ENCODE measurements at regions of chr5 and their contacts with region 1.

Region 1: DNA sequence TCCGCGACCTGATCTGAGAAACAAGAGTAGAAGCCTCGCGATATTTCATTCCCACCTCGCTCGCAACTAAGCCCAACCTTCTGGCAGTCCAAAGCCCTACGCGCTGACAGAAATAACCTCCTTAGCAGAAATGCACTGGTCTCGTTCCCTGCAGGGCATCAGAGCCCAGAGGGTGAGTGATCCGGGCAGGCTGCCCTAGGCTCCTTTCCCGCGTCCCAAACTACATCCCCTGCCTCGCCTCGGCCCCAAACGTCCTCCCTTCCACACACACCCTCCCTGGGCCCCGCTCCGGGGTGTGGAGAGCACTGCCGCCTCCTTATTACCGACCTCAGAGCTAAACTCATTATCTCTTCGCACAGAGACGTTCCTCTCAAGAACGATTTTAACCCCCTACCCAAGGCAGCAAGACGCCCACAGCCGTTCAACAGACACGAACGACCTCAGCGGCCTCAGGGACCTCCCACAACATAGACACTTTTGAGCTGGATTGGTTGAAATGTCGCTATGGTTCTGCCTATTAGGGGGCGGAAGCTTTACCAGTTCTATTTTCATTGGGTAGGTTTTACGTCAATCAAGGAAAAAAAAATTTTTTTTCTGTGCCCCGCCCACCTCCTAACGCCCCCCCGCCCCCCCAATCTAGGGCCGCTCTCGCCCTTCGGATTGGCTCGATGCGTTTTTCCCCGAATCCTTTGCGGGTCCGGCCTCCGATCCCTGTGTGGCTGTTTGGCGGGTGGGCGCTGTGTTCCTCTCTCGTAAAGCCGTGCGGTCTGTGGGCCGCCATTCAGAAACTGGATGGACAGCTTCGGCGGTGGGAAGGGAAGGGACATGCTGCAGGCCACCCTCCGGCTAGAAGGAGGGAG is at the start of gene CETN3:
- DNase-seq: peak; percentile 92 to 95
- H3K4me3 ChIP-seq: peak within 1 kb of the TSS; percentile 62 to 79
- H3K27ac ChIP-seq: peak within 1 kb of the TSS; percentile 93 to 97
- H3K4me1 ChIP-seq: no peaks in the 10 kb centered on the region
- H3K27me3 ChIP-seq: no peaks in the 10 kb centered on the region
- CTCF ChIP-seq: peak in 2 of 4 experiments; percentile 2 to 7
- POLR2A ChIP-seq: peak; percentile 84 to 91
- total RNA-seq, gene CETN3: 16.8 to 80.4 (median 57.6) TPM

Region 2: GRCh38 chr5:90529939-90530677 is 120.6 kb after region 1 on chr5:
- intact Hi-C with region 1: loop called (anchors 10 kb)
- DNase-seq: peak; percentile 66 to 73
- H3K4me3 ChIP-seq: peak overlapping the region; percentile 89 to 99
- H3K27ac ChIP-seq: peak overlapping the region; percentile 96 to 97
- H3K4me1 ChIP-seq: peaks cover 0 to 3% of the 10 kb centered on the region in 2 donors
- H3K27me3 ChIP-seq: no peaks in the 10 kb centered on the region
- CTCF ChIP-seq: peak; percentile 60 to 85 (median 69)
- POLR2A ChIP-seq: no peak